GM12878 (cell line): ENCODE measurements at regions of chr10 and their contacts with region 1.

Region 1: DNA sequence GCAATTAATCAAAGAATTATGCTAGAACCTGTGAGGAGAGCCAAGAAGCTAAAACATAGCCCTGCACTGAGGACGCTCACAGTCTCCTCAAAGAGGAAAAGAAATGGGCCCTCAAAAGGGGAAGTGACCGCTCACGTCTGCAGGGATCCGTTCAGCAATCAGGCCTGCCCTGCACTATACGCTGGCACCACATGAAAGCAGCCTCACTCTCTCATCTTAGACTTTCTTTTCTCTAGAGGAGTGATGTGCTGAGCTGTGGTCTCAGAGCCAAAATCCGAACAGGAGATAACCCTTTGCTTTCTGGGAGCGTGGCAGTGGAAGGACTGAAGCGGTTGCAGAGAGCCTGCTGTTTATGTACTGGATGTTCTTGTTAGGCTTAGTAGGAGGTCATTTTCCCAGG is 6.3 kb upstream of the IL2RA start:
- DNase-seq: no peak
- ATAC-seq: peak; percentile 86
- H3K4me3 ChIP-seq: no peak overlapping the region
- H3K27ac ChIP-seq: no peak overlapping the region
- H3K4me1 ChIP-seq: peaks cover 30% of the 10 kb centered on the region
- H3K27me3 ChIP-seq: no peaks in the 10 kb centered on the region; a peak in 1 of 4 replicates
- CTCF ChIP-seq: no peak
- EP300 ChIP-seq: no peak
- POLR2A ChIP-seq: no peak
- RAD21 ChIP-seq: no peak

Region 2: GRCh38 chr10:6083523-6084475 is 15.4 kb after region 1 on chr10:
- CTCF ChIA-PET with region 1: interaction called, 53 read pairs
- POLR2A ChIA-PET with region 1: interaction called, 7 read pairs
- RAD21 ChIA-PET with region 1: interaction called, 10 read pairs
- SMC1A ChIA-PET with region 1: interaction called, 14 read pairs
- in situ Hi-C with region 1: no loop called
- intact Hi-C with region 1: no loop called
- DNase-seq: no peak
- ATAC-seq: no peak
- H3K4me3 ChIP-seq: no peak overlapping the region
- H3K27ac ChIP-seq: no peak overlapping the region
- H3K4me1 ChIP-seq: no peaks in the 10 kb centered on the region
- H3K27me3 ChIP-seq: peaks cover 0 to 6% of the 10 kb centered on the region in 2 experiments; a peak in 2 of 4 replicates
- CTCF ChIP-seq: no peak
- EP300 ChIP-seq: no peak
- POLR2A ChIP-seq: no peak
- RAD21 ChIP-seq: no peak